WTC11 (cell line): ENCODE measurements at regions of chr10 and their contacts with region 1.

Region 1: DNA sequence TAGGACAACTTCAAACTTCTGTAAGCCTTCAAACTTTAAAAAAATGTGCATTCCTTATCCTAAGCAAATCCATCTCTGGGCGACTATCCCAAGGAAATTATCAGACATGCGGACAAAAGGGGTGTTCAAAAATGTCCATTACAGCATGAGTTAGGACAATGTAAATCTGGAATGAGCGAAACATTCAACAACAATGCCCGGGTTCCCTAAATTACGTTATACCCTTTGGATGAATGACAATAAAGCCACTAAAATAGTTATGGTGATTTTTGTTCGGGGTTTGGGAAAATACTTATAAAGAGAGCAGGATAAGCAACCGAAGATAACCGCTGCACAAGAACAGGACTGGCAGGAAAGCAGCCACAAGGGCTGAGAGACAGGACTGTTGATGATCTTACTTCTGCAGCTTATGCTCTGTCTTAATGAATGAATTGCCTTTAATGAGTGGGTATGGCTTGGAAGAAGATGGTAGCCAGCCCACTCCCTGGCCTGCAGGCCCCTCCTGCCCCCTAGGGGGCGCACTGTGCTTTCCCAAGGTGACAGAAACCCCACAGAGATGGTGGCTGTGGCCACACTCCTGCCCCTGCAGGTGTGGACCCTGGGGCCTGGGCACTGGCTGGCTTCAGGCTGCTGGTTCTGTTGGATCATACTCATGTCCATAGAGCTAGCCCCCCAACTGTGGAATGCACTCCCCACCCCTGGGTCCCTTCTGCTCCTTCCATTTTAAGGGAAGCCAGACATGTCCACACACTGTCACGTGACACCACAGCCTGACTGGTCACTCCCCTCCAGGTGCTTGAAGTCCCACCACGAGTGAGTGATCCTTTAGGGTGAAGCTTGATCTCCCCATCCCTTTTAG is 45.0 kb downstream of the ZCCHC24 start:
- DNase-seq: peak; percentile 71
- ATAC-seq: 0 out of 2 replicates have a peak, but pooled peaks have one; percentile 5
- H3K4me3 Mint-ChIP-seq: no peak overlapping the region
- H3K27ac Mint-ChIP-seq: no peak overlapping the region
- H3K4me1 Mint-ChIP-seq: peaks cover 44% of the 10 kb centered on the region
- H3K27me3 Mint-ChIP-seq: peaks cover 6% of the 10 kb centered on the region; the same call in 1 of the 2 replicates
- CTCF ChIP-seq: peak; percentile 84

Region 2: GRCh38 chr10:79022565-79023230 is 377.7 kb before region 1 on chr10:
- CTCF ChIA-PET with region 1: no interaction called
- POLR2A ChIA-PET with region 1: no interaction called
- DNase-seq: peak; percentile 67
- ATAC-seq: peak; percentile 96
- H3K4me3 Mint-ChIP-seq: no peak overlapping the region
- H3K27ac Mint-ChIP-seq: peak overlapping the region; percentile 15
- H3K4me1 Mint-ChIP-seq: peaks cover 7% of the 10 kb centered on the region
- H3K27me3 Mint-ChIP-seq: no peaks in the 10 kb centered on the region
- CTCF ChIP-seq: no peak

Region 3: GRCh38 chr10:79445141-79445976 is 45.0 kb after region 1 on chr10 and contains the start of gene ZCCHC24:
- CTCF ChIA-PET with region 1: interaction called, 18 read pairs
- POLR2A ChIA-PET with region 1: interaction called, 5 read pairs
- DNase-seq: peak; percentile 98
- ATAC-seq: peak; percentile 95
- H3K4me3 Mint-ChIP-seq: peak within 1 kb of the TSS; percentile 86
- H3K27ac Mint-ChIP-seq: peak within 1 kb of the TSS; percentile 98
- H3K4me1 Mint-ChIP-seq: peaks cover 31% of the 10 kb centered on the region
- H3K27me3 Mint-ChIP-seq: peaks cover 44% of the 10 kb centered on the region
- CTCF ChIP-seq: no peak
- total RNA-seq, gene ZCCHC24: 6.0 to 7.7 TPM (median 6.2 TPM) in 3 replicates